ENCODE measurements at regions of chr17 and their contacts with region 1.

Region 1: DNA sequence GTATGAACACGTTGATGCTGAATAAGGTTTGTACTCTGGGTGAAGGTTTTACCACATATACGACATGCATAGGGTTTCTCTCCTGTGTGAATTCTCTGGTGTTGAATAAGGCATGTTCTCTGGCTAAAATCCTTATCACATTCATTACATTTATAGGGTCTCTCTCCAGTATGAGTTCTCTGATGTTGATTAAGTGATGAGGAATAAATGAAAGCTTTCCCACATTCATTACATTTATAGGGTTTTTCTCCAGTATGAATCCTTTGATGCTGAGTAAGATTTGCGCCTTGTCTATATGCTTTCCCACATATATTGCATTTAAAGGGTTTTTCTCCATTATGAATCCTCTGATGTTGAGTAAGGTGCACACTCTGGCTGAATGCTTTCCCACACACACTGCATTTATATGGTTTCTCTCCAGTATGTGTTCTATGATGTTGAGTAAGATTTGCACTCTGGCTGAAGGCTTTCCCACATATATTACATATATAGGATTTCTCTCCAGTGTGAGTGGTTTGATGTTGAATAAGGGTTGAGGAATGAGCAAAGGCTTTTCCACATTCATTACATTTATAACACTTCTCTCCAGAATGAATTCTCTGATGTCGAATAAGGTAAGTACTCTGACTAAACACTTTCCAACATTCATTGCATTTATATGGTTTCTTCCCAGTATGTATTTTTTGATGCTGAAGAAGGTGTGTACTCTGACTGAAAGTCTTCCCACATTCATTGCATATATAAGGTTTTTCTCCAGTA is 16.9 kb downstream of the ZNF287 start:
- DNase-seq: no peak
- ATAC-seq: no peak
- H3K4me3 ChIP-seq: no peak overlapping the region
- H3K27ac ChIP-seq: no peak overlapping the region
- H3K4me1 ChIP-seq: no peaks in the 10 kb centered on the region
- H3K27me3 ChIP-seq: no peaks in the 10 kb centered on the region
- CTCF ChIP-seq: no peak

Region 2: DNA sequence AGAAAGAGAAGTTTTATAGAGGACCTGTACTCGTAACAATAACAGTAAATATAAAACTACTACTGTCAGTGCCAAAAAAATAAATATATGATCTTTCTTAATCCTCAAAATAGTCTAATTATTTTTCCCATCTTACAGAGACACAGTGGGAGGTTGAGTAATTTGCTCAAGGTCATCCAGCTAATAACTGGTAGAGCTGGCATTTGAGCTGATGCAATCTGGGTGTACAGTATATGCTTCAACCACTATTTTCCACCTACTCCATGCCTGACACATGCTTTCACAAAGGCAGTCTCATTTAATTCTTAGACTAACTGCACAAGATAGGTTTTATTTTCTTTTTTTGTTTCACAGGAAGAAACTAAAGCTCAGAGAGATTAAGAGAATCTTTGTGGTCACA is 301.4 kb before region 1 on chr17:
- CTCF ChIA-PET with region 1: no interaction called
- POLR2A ChIA-PET with region 1: no interaction called
- in situ Hi-C with region 1: no loop called
- intact Hi-C with region 1: no loop called
- DNase-seq: no peak
- ATAC-seq: no peak
- H3K4me3 ChIP-seq: no peak overlapping the region
- H3K27ac ChIP-seq: peak overlapping the region; percentile 1; the same call in 1 of the 2 replicates
- H3K4me1 ChIP-seq: no peaks in the 10 kb centered on the region
- H3K27me3 ChIP-seq: no peaks in the 10 kb centered on the region
- CTCF ChIP-seq: no peak

Region 3: DNA sequence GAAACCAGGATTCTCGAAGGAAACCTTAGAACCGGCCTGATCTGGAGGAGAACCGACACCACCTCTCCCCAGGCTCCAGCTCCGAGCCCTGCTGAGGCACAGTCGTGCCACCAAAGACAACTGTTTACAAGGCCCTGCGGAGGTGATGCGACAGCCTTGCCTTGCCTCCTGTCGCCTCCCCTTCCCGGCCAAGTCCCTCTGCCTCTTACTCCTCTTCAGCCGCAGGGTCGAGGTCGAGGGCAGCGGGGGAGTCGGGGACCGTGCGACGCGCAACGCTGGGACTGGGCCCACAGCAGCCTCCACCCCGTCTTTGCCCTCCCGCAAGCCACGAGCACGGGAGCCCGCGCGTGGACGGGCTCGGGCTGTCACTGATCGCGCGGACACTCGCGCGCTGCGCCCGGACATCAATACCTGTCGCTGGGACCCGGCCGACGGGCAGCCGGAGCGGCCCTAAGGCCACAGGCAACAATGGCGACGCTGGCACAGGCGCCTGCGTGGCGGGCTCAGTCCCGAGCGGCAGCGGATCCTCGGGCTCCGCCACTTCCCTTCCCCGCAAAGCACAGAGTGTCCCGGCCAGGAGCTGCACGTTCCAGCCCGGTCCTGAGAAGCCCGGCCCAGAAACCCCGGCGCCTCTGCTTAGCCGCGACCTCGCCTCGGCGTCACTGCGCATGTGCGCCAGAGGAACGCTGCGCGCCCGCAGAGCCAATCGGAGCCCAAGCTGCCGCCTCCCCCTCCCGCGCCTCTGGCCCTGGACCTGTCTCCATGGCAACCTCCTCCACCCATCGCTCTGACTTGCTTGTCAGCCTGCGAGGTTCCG is 16.7 kb after region 1 on chr17 and contains the start of gene ZNF287:
- CTCF ChIA-PET with region 1: no interaction called
- POLR2A ChIA-PET with region 1: interaction called, 10 read pairs
- in situ Hi-C with region 1: no loop called
- intact Hi-C with region 1: no loop called
- DNase-seq: peak; percentile 48
- ATAC-seq: peak; percentile 99
- H3K4me3 ChIP-seq: peak within 1 kb of the TSS; percentile 60 to 79
- H3K27ac ChIP-seq: peak within 1 kb of the TSS; percentile 61
- H3K4me1 ChIP-seq: peaks cover 4% of the 10 kb centered on the region
- H3K27me3 ChIP-seq: no peaks in the 10 kb centered on the region
- CTCF ChIP-seq: no peak
- total RNA-seq, gene ZNF287: 12.3 TPM